ENCODE measurements at regions of chr16 and their contacts with region 1.

Region 1: GRCh38 chr16:4200000-4200780 is 41.7 kb downstream of the SRL start:
- DNase-seq: peak; percentile 72 to 74
- ATAC-seq: peak; percentile 96
- H3K4me3 ChIP-seq: no peak overlapping the region
- H3K27ac ChIP-seq: peak overlapping the region in 1 of 2 experiments; percentile 65; a peak in 3 of 6 replicates
- H3K4me1 ChIP-seq: peaks cover 7% of the 10 kb centered on the region; the same call in 2 of the 3 replicates
- CTCF ChIP-seq: peak; percentile 66
- EP300 ChIP-seq: no peak
- POLR2A ChIP-seq: no peak
- RAD21 ChIP-seq: peak; percentile 86 to 89

Region 2: DNA sequence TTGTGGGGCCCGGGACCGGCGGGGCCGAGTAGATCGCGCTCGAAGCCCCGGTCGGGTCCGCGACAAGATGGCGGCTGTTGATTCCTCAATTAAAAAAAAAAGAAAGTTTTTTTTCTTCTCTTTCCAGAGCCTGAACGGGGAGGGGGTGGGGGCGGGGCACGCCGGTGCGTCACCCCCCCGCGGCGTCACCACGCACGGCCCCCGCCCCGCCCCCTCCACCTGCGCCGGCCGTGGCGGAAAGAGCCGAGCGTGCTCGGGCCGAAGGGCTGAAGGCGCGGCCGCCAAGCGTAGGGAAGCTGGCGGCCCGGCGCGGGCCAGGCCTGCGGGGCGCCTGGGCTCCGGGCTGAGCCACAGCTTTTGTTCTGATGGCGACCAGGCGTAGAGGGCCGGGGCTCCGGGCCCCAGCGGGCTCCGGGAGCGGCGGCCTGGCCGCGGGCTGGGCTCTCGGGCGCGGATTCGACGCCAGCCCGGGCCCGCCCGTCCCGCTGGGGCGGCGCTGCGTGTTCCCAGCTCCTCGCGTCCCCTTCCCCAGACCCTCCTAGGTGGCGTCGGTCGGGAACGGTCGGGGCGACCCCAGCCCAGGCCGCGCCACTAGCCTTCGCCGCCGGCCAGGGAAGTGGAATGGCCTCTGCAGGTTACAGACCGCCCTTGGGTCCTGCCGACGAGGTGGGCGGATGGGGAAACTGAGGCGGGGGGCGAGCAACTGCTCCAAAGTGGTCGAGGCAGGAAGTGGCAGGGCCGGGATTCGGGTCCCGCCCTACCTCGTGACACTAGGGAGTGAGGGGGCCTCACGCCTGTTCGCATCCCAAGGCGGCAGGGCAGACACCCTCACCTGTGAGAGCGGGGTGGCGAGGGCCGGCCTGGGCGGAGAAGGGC is 319.3 kb before region 1 on chr16 and contains the start of gene CREBBP:
- CTCF ChIA-PET with region 1: no interaction called
- POLR2A ChIA-PET with region 1: no interaction called
- DNase-seq: peak; percentile 38 to 90
- ATAC-seq: peak; percentile 86 to 92
- H3K4me3 ChIP-seq: peak within 1 kb of the TSS; percentile 94
- H3K27ac ChIP-seq: peak within 1 kb of the TSS; percentile 94 to 97
- H3K4me1 ChIP-seq: peaks cover 22% of the 10 kb centered on the region; the same call in 2 of the 3 replicates
- CTCF ChIP-seq: no peak; the same call in 2 of the 3 replicates
- EP300 ChIP-seq: no peak
- POLR2A ChIP-seq: peak; percentile 83
- RAD21 ChIP-seq: no peak
- polyA plus RNA-seq, gene CREBBP: 8.0 and 17.5 TPM in 2 replicates

Region 3: DNA sequence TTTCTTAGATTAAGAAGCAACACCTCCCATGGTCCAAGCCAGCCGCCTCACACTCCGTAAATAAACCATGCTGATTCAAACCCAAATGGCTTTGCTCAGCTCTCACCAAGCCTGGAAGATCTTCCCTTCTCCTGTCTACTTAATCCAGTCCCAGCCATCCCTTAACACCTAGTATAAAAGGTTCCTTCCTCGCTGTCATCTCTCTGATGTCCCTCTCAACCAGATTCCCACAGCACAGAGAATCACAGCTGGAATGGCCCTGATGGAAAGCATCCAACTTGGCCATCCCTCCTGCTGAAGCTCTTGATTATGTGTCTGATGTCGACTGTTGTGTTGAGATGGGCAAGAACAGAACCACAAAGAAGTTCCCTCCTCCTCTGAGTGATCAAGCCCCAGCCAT is 33.4 kb before region 1 on chr16:
- CTCF ChIA-PET with region 1: no interaction called
- POLR2A ChIA-PET with region 1: no interaction called
- DNase-seq: no peak
- ATAC-seq: no peak
- H3K4me3 ChIP-seq: no peak overlapping the region
- H3K27ac ChIP-seq: no peak overlapping the region
- H3K4me1 ChIP-seq: 0 out of 3 replicates have a peak, but pooled peaks cover 4% of the 10 kb centered on the region
- CTCF ChIP-seq: no peak
- EP300 ChIP-seq: no peak
- POLR2A ChIP-seq: no peak
- RAD21 ChIP-seq: no peak

Region 4: GRCh38 chr16:4214215-4214621 is 14.0 kb after region 1 on chr16:
- CTCF ChIA-PET with region 1: interaction called, 10 read pairs
- POLR2A ChIA-PET with region 1: no interaction called
- DNase-seq: peak; percentile 40 to 52
- ATAC-seq: peak; percentile 18 to 58; a peak in 3 of 6 replicates
- H3K4me3 ChIP-seq: no peak overlapping the region
- H3K27ac ChIP-seq: peak overlapping the region; percentile 57 to 82
- H3K4me1 ChIP-seq: peaks cover 24% of the 10 kb centered on the region
- CTCF ChIP-seq: no peak
- EP300 ChIP-seq: no peak
- POLR2A ChIP-seq: no peak
- RAD21 ChIP-seq: no peak

Region 5: DNA sequence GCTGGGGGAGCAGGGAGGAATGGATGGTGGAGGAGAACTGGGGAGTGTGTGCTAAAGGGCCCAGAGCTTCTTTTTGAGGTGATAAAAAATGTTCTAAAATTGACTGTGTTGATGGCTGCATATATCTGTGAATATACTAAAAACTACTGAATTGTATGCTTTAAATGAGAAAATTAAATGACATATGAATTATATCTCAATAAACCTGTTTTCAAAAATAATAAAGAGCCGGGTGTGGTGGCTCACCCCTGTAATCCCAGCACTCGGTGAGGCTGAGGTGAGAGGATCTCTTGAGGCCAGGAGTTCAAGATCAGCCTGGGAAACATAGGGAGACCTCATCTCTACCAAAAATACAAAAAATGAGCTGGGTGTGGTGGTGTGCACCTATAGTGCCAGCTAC is 24.9 kb after region 1 on chr16:
- CTCF ChIA-PET with region 1: interaction called, 10 read pairs
- POLR2A ChIA-PET with region 1: no interaction called
- DNase-seq: no peak
- ATAC-seq: no peak
- H3K4me3 ChIP-seq: no peak overlapping the region
- H3K27ac ChIP-seq: no peak overlapping the region
- H3K4me1 ChIP-seq: no peaks in the 10 kb centered on the region
- CTCF ChIP-seq: no peak
- EP300 ChIP-seq: no peak
- POLR2A ChIP-seq: no peak
- RAD21 ChIP-seq: no peak

Region 6: GRCh38 chr16:4435337-4436067 is 235.3 kb after region 1 on chr16:
- CTCF ChIA-PET with region 1: no interaction called
- POLR2A ChIA-PET with region 1: no interaction called
- DNase-seq: no peak
- ATAC-seq: no peak
- H3K4me3 ChIP-seq: no peak overlapping the region
- H3K27ac ChIP-seq: peak overlapping the region in 1 of 2 experiments; percentile 47; a peak in 3 of 6 replicates
- H3K4me1 ChIP-seq: peaks cover 10% of the 10 kb centered on the region
- CTCF ChIP-seq: no peak
- EP300 ChIP-seq: no peak
- POLR2A ChIP-seq: no peak
- RAD21 ChIP-seq: no peak

Measured in A549 (cell line).